CD8-positive, alpha-beta T cell (primary cell): ENCODE measurements at regions of chr20 and their contacts with region 1.

Region 1: DNA sequence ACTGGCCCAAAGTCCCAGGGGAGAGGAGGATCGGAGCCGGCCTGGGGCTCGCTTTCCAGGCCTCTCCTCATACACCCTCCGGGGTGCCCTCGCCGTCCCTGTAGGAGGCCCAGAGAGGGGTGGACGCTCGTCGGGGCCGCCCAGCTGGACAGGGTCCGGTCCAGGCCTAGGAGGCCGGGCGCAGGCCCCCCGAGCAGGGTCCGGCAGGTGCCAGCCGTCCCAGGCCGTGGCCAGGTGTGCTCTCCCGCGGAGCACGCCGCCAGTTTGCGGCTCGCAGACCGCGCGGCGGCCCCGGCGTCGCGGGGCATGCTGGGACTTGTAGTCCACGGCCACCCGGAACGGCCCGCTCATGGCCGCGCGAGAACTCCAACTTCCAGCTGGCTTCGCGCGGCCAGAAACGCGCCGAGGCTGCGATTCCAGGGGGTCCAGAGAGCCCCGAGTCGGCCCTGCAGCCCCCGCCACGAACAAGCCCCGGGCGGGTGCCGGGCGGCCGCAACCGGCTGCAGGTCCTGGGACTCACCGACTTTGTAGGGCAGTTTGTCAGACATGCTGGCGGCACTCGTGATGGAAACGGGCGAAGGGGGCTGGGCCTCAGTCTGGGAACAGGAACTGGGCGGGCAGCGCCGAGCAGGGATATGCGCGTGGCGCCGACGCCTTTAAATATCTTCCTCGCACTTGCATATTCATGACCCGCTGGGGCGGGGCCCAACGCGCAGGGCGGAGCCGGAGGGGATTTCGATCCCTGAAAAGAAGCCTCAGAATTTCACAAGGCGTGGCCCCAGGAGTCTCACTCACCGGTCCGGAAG is at the start of gene AHCY:
- DNase-seq: peak; percentile 76 to 96 (median 91)
- ATAC-seq: peak; percentile 94
- H3K4me3 ChIP-seq: peak within 1 kb of the TSS; percentile 69 to 92
- H3K4me3 Mint-ChIP-seq: peak within 1 kb of the TSS; percentile 96
- H3K27ac ChIP-seq: peak within 1 kb of the TSS; percentile 67 to 86
- H3K27ac Mint-ChIP-seq: peak within 1 kb of the TSS; percentile 94
- H3K4me1 ChIP-seq: no peaks in the 10 kb centered on the region
- H3K4me1 Mint-ChIP-seq: peaks cover 17% of the 10 kb centered on the region
- H3K27me3 ChIP-seq: no peaks in the 10 kb centered on the region
- H3K27me3 Mint-ChIP-seq: no peaks in the 10 kb centered on the region
- CTCF ChIP-seq: no peak
- total RNA-seq, gene AHCY: 16.1 to 17.8 TPM

Region 2: DNA sequence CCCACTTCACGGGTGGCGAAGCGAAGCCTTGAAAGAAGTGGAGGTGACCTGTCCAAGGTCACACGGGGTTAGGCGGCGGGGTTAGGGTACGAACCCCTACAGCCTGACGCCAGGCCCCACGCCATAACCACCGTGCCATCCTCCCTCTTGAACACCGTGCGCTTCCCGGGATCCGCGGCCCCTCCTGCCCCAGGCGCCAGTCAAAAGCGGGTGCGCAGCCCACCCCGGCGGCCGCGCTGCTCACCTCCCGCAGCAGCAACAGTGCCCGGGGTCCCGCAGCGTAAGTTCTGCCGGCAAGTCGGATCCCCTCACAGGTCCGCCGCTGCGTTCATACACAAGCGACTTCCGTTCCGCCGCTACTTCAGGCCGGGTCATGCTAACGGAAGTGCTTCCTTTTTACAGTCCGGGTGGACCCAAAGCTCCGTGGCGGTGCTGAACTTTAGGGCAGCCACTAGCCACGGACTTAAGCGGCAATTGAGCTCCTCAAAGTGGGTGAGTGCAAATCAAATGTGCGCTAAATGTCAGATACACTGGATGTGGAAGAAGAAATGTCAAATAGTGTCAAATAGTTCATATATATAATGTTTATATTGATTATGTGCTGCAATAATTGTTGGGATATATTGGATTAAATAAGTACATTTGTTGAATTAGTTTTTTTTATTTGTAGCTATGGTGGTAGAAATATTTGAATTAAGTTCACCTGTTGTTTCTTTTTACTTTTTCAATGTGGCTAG is 901.6 kb before region 1 on chr20 and contains the start of gene CDK5RAP1:
- CTCF ChIA-PET with region 1: no interaction called
- POLR2A ChIA-PET with region 1: no interaction called
- intact Hi-C with region 1: loop called in 1 of 2 experiments (anchors 2 kb)
- DNase-seq: peak; percentile 71 to 93 (median 85)
- ATAC-seq: peak; percentile 96
- H3K4me3 ChIP-seq: peak within 1 kb of the TSS; percentile 66 to 67
- H3K4me3 Mint-ChIP-seq: peak within 1 kb of the TSS; percentile 97
- H3K27ac ChIP-seq: peak within 1 kb of the TSS; percentile 56 to 64
- H3K27ac Mint-ChIP-seq: peak within 1 kb of the TSS; percentile 93
- H3K4me1 ChIP-seq: peaks cover 26% of the 10 kb centered on the region
- H3K4me1 Mint-ChIP-seq: peaks cover 55% of the 10 kb centered on the region
- H3K27me3 ChIP-seq: no peaks in the 10 kb centered on the region
- H3K27me3 Mint-ChIP-seq: no peaks in the 10 kb centered on the region
- CTCF ChIP-seq: no peak
- total RNA-seq, gene CDK5RAP1: 60.7 to 69.9 TPM

Region 3: DNA sequence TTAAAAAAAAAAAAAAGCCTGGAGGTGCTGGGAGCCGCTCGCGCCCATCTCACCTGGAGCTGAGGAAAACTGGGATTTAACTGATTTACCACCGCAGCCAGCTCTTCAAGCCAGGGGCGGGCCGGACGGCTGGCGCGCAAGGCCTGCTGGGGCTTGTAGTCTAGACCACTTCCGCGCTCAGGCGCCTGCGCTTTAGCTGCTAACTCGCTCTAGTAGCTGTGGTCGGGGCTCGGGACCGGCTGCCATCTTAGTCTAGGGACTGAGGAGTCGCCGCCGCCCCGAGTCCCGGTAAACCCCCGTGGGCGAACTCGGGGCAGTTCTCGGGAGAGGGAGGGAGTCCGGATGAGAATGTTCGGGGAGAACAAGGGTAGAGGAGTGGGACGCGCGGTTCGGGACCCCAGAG is 60.1 kb after region 1 on chr20 and contains the start of gene ITCH:
- CTCF ChIA-PET with region 1: no interaction called
- POLR2A ChIA-PET with region 1: interaction called, 7 read pairs
- intact Hi-C with region 1: loop called (anchors 1 kb)
- DNase-seq: peak; percentile 80 to 96 (median 93)
- ATAC-seq: peak; percentile 99
- H3K4me3 ChIP-seq: peak within 1 kb of the TSS; percentile 92 to 93
- H3K4me3 Mint-ChIP-seq: peak within 1 kb of the TSS; percentile 99
- H3K27ac ChIP-seq: peak within 1 kb of the TSS; percentile 86 to 91
- H3K27ac Mint-ChIP-seq: peak within 1 kb of the TSS; percentile 99
- H3K4me1 ChIP-seq: peaks cover 40% of the 10 kb centered on the region
- H3K4me1 Mint-ChIP-seq: peaks cover 45% of the 10 kb centered on the region
- H3K27me3 ChIP-seq: no peaks in the 10 kb centered on the region
- H3K27me3 Mint-ChIP-seq: no peaks in the 10 kb centered on the region
- CTCF ChIP-seq: no peak
- total RNA-seq, gene ITCH: 50.4 to 55.2 TPM

Region 4: GRCh38 chr20:34676642-34677373 is 373.9 kb after region 1 on chr20 and contains the start of gene PIGU:
- CTCF ChIA-PET with region 1: no interaction called
- POLR2A ChIA-PET with region 1: no interaction called
- intact Hi-C with region 1: loop called in 1 of 2 experiments (anchors 1 kb)
- DNase-seq: peak; percentile 92 to 98 (median 96)
- ATAC-seq: peak; percentile 96
- H3K4me3 ChIP-seq: peak within 1 kb of the TSS; percentile 80 to 94
- H3K4me3 Mint-ChIP-seq: peak within 1 kb of the TSS; percentile 97
- H3K27ac ChIP-seq: peak within 1 kb of the TSS; percentile 83 to 90
- H3K27ac Mint-ChIP-seq: peak within 1 kb of the TSS; percentile 96
- H3K4me1 ChIP-seq: peaks cover 16% of the 10 kb centered on the region
- H3K4me1 Mint-ChIP-seq: peaks cover 22% of the 10 kb centered on the region
- H3K27me3 ChIP-seq: no peaks in the 10 kb centered on the region
- H3K27me3 Mint-ChIP-seq: no peaks in the 10 kb centered on the region
- CTCF ChIP-seq: no peak
- total RNA-seq, gene PIGU: 3.3 to 5.2 TPM

Region 5: DNA sequence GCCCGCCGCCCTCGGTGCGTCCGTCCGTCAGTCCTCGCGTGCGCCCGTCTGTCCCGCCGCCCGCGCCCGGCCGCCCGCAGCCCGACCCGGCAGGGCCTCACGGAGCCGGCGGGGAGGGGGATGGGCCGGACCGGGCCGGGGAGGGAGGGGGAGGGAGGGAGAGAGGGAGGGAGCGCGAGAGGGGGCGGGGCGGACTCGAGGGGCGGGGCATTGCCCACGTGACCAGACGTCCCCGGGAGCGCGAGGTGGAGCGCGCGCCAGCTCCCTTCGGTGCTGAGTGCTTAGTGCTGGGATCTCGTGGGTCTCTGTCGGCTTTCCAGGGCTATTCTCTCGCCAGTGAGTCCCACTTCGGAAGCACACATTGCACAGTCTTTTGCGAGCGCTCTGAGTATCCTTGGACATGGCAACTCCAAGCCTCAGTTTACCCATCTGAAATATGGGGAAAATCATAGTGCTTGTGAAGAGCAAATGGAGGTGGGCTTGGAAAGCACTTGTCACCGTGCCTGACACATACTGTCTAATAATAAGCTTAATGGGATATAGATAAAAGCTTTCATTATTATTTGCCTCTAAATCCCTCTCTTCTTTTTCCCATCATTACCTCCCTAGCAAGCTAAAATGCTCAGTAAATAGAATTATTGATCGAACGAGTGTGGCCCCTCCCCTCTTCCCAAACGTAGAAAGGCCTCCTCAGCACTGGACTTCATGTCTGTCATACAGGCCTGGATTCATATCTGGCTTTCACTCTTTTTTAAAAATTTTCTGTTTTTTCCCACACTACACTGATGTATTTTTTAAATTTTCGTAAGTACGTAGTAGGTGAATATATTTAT is 522.8 kb after region 1 on chr20 and contains the start of gene NCOA6:
- CTCF ChIA-PET with region 1: no interaction called
- POLR2A ChIA-PET with region 1: no interaction called
- intact Hi-C with region 1: loop called (anchors 1 to 2 kb)
- DNase-seq: peak; percentile 76 to 92 (median 85)
- ATAC-seq: peak; percentile 71
- H3K4me3 ChIP-seq: peak within 1 kb of the TSS; percentile 87 to 89
- H3K4me3 Mint-ChIP-seq: peak within 1 kb of the TSS; percentile 98
- H3K27ac ChIP-seq: peak within 1 kb of the TSS; percentile 38 to 67
- H3K27ac Mint-ChIP-seq: peak within 1 kb of the TSS; percentile 97
- H3K4me1 ChIP-seq: peaks cover 21% of the 10 kb centered on the region
- H3K4me1 Mint-ChIP-seq: peaks cover 41% of the 10 kb centered on the region
- H3K27me3 ChIP-seq: no peaks in the 10 kb centered on the region
- H3K27me3 Mint-ChIP-seq: peaks cover 2% of the 10 kb centered on the region
- CTCF ChIP-seq: no peak
- total RNA-seq, gene NCOA6: 13.0 to 13.5 TPM

Region 6: DNA sequence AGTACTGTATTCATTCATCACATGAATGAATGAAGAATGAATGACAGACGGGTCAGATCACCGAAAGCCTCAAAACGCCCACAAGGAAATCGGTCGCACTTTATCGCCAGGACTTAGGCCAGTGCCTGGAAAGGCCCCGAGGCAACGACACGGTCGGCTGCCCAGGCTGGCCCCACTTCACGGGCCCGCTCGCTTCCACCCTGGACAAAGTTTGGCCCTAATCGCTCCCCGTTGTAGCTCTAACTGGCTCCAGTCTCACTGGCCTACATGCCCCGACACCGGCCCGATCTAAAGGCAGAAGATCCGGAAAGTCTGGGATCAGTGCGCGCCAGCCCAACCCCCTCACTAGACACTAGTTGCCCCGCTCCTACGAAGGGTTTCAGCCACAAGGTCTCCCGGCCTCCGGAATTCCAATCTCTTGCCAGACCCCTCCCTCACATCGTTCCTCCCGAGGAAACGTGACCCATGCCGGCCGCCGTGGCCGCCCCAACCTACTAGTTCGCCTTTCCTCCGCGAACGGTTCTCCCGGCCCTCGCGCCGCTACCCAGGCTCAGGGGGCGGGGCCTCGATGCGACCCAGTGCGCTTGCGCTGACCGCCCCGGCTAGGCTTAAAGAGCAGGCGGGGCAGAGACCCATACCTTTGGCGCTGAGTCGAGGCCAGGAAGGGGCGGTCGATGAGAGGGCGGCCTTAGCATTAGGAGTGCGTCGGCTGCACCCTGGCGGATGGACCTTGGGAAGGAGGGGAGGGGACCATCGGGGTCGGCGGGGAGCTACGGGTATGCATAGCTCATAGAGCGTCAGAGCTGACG is 652.5 kb after region 1 on chr20 and contains the starts of genes GSS and MYH7B:
- CTCF ChIA-PET with region 1: no interaction called
- POLR2A ChIA-PET with region 1: no interaction called
- intact Hi-C with region 1: loop called (anchors 2 to 5 kb)
- DNase-seq: peak; percentile 90 to 99 (median 96)
- ATAC-seq: peak; percentile 95
- H3K4me3 ChIP-seq: peak within 1 kb of the TSS; percentile 74 to 83
- H3K4me3 Mint-ChIP-seq: peak within 1 kb of the TSS; percentile 99
- H3K27ac ChIP-seq: peak within 1 kb of the TSS; percentile 64 to 84
- H3K27ac Mint-ChIP-seq: peak within 1 kb of the TSS; percentile 95
- H3K4me1 ChIP-seq: peaks cover 12% of the 10 kb centered on the region
- H3K4me1 Mint-ChIP-seq: peaks cover 32% of the 10 kb centered on the region
- H3K27me3 ChIP-seq: no peaks in the 10 kb centered on the region
- H3K27me3 Mint-ChIP-seq: no peaks in the 10 kb centered on the region
- CTCF ChIP-seq: no peak
- total RNA-seq, gene GSS: 23.6 to 24.3 TPM
- total RNA-seq, gene MYH7B: 0.19 to 0.54 TPM

Region 7: DNA sequence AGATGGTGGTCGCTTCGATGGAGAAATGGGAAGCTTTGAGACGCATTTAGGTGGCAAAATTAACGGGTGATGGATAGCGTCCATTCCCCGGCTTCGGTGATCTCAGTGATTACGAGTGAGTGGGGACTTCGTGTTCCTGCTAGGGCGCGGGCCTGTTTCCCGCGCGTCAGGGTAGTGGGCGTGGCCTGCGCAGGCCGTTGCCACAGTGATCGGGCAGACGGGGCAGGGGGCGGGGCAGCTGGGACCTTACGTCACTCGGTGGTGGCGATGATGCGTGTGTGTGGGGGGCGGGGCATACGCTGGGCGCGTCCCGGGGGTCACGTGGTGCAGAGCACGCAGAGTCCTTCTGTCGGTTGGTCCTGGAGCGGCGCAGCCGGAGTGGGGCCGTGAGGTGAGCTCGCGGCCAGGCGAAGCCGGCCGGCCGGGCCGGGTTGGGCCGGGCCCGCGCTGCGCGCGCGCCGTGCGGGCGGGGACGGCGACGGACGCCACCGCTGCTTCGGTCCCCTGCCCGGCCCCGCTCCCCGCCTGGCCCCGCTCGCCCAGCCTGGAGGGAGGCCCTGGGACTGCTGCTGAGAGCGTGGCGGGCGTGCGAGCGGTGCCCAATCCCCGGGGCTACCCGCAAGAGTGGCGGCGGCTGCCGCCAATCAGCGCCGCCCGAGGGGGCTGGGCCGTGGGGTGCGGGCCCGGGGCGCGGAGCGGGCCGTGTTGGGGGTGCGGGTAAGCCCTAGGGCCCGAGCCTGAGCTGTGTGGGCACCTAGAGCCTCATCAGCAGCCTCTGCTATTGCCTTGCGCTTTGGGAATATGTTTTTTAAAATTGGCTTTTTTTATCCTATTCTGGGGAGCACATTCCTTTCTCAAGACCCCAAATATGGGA is 1469.0 kb after region 1 on chr20 and contains the start of gene PHF20:
- CTCF ChIA-PET with region 1: no interaction called
- POLR2A ChIA-PET with region 1: no interaction called
- intact Hi-C with region 1: loop called in 1 of 2 experiments (anchors 10 kb)
- DNase-seq: peak; percentile 100
- ATAC-seq: peak; percentile 82
- H3K4me3 ChIP-seq: peak within 1 kb of the TSS; percentile 65 to 71
- H3K4me3 Mint-ChIP-seq: peak within 1 kb of the TSS; percentile 91
- H3K27ac ChIP-seq: peak within 1 kb of the TSS; percentile 87 to 95
- H3K27ac Mint-ChIP-seq: peak within 1 kb of the TSS; percentile 100
- H3K4me1 ChIP-seq: peaks cover 89% of the 10 kb centered on the region
- H3K4me1 Mint-ChIP-seq: peaks cover 81% of the 10 kb centered on the region
- H3K27me3 ChIP-seq: no peaks in the 10 kb centered on the region
- H3K27me3 Mint-ChIP-seq: no peaks in the 10 kb centered on the region
- CTCF ChIP-seq: no peak
- total RNA-seq, gene PHF20: 101 to 107 TPM